ENCODE measurements at regions of chr1 and their contacts with region 1.

Region 1: GRCh38 chr1:4616831-4617465 is 37.5 kb upstream of the AJAP1 start:
- DNase-seq: no peak
- ATAC-seq: no peak
- H3K4me3 ChIP-seq: no peak overlapping the region
- H3K27ac ChIP-seq: no peak overlapping the region
- H3K4me1 ChIP-seq: no peaks in the 10 kb centered on the region
- H3K27me3 ChIP-seq: peaks cover 38% of the 10 kb centered on the region
- CTCF ChIP-seq: no peak

Region 2: GRCh38 chr1:4549930-4550329 is 67.0 kb before region 1 on chr1:
- CTCF ChIA-PET with region 1: no interaction called
- POLR2A ChIA-PET with region 1: interaction called, 22 read pairs
- intact Hi-C with region 1: no loop called
- DNase-seq: peak; percentile 12
- ATAC-seq: no peak
- H3K4me3 ChIP-seq: no peak overlapping the region
- H3K27ac ChIP-seq: no peak overlapping the region
- H3K4me1 ChIP-seq: no peaks in the 10 kb centered on the region
- H3K27me3 ChIP-seq: no peaks in the 10 kb centered on the region
- CTCF ChIP-seq: no peak

Region 3: DNA sequence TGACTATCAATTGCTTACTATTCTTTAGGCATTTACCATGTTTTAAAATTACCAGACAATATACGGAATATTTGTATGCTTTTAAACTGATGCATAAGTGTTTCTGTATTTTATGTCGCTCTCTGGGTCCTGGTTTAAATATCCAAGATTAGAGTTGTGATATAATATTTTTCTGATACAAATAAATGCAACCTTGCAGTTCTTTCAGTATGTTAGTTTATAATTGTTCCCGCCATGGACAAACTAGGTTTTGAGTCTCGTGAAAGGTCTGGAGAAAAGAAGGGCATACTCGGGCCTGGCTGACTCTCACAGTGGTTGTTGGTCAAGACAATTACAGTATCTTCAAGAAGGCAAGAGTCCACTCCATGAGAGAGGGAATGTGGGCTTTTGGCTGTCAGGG is 35.1 kb before region 1 on chr1:
- CTCF ChIA-PET with region 1: no interaction called
- POLR2A ChIA-PET with region 1: no interaction called
- intact Hi-C with region 1: no loop called
- DNase-seq: no peak
- ATAC-seq: no peak
- H3K4me3 ChIP-seq: no peak overlapping the region
- H3K27ac ChIP-seq: no peak overlapping the region
- H3K4me1 ChIP-seq: no peaks in the 10 kb centered on the region
- H3K27me3 ChIP-seq: peaks cover 27% of the 10 kb centered on the region; the same call in 1 of the 2 replicates
- CTCF ChIP-seq: no peak

Region 4: GRCh38 chr1:4836574-4836973 is 219.6 kb after region 1 on chr1:
- CTCF ChIA-PET with region 1: no interaction called
- POLR2A ChIA-PET with region 1: interaction called, 11 read pairs
- intact Hi-C with region 1: no loop called
- DNase-seq: no peak
- ATAC-seq: no peak
- H3K4me3 ChIP-seq: no peak overlapping the region
- H3K27ac ChIP-seq: no peak overlapping the region
- H3K4me1 ChIP-seq: no peaks in the 10 kb centered on the region
- H3K27me3 ChIP-seq: no peaks in the 10 kb centered on the region
- CTCF ChIP-seq: no peak

Measured in PC-3 (cell line).